PC-3 (cell line): ENCODE measurements at regions of chr6 and their contacts with region 1.

Region 1: DNA sequence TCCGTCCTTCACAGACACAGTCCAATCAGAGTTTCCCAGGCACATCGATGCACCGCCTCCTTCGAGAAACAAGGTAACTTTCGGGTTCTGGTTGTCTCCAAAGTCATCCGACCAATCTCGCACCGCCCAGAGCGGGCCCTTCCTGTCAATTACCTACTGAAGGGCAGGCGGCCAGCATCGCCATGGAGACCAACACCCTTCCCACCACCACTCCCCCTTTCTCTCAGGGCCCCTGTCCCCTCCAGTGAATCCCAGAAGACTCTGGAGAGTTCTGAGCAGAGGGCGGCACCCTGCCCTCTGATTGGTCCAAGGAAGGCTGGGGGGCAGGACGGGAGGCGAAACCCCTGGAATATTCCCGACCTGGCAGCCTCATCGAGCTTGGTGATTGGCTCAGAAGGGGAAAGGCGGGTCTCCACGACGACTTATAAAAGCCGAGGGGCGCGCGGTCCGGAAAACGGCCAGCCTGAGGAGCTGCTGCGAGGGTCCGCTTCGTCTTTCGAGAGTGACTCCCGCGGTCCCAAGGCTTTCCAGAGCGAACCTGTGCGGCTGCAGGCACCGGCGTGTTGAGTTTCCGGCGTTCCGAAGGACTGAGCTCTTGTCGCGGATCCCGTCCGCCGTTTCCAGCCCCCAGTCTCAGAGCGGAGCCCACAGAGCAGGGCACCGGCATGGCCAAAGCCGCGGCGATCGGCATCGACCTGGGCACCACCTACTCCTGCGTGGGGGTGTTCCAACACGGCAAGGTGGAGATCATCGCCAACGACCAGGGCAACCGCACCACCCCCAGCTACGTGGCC is at the start of gene HSPA1B:
- DNase-seq: peak; percentile 99
- ATAC-seq: peak; percentile 82
- H3K4me3 ChIP-seq: peak within 1 kb of the TSS; percentile 95
- H3K27ac ChIP-seq: peak within 1 kb of the TSS; percentile 82
- H3K4me1 ChIP-seq: peaks cover 43% of the 10 kb centered on the region
- H3K27me3 ChIP-seq: no peaks in the 10 kb centered on the region
- CTCF ChIP-seq: no peak
- total RNA-seq, gene HSPA1B: 265 and 331 TPM in 2 replicates

Region 2: GRCh38 chr6:31712296-31712695 is 115.2 kb before region 1 on chr6:
- CTCF ChIA-PET with region 1: no interaction called
- POLR2A ChIA-PET with region 1: interaction called, 3 read pairs
- intact Hi-C with region 1: loop called (anchors 1 kb)
- DNase-seq: peak; percentile 61
- ATAC-seq: peak; percentile 97
- H3K4me3 ChIP-seq: no peak overlapping the region
- H3K27ac ChIP-seq: no peak overlapping the region
- H3K4me1 ChIP-seq: peaks cover 2% of the 10 kb centered on the region
- H3K27me3 ChIP-seq: no peaks in the 10 kb centered on the region
- CTCF ChIP-seq: peak; percentile 66

Region 3: GRCh38 chr6:31795616-31796298 is 31.7 kb before region 1 on chr6 and contains the start of gene VARS1:
- CTCF ChIA-PET with region 1: interaction called, 5 read pairs
- POLR2A ChIA-PET with region 1: interaction called, 14 read pairs
- intact Hi-C with region 1: loop called (anchors 2 kb)
- DNase-seq: peak; percentile 90
- ATAC-seq: peak; percentile 74
- H3K4me3 ChIP-seq: peak within 1 kb of the TSS; percentile 87
- H3K27ac ChIP-seq: peak within 1 kb of the TSS; percentile 84
- H3K4me1 ChIP-seq: peaks cover 24% of the 10 kb centered on the region
- H3K27me3 ChIP-seq: no peaks in the 10 kb centered on the region
- CTCF ChIP-seq: peak; percentile 70
- total RNA-seq, gene VARS1: 89.8 and 130 TPM in 2 replicates

Region 4: DNA sequence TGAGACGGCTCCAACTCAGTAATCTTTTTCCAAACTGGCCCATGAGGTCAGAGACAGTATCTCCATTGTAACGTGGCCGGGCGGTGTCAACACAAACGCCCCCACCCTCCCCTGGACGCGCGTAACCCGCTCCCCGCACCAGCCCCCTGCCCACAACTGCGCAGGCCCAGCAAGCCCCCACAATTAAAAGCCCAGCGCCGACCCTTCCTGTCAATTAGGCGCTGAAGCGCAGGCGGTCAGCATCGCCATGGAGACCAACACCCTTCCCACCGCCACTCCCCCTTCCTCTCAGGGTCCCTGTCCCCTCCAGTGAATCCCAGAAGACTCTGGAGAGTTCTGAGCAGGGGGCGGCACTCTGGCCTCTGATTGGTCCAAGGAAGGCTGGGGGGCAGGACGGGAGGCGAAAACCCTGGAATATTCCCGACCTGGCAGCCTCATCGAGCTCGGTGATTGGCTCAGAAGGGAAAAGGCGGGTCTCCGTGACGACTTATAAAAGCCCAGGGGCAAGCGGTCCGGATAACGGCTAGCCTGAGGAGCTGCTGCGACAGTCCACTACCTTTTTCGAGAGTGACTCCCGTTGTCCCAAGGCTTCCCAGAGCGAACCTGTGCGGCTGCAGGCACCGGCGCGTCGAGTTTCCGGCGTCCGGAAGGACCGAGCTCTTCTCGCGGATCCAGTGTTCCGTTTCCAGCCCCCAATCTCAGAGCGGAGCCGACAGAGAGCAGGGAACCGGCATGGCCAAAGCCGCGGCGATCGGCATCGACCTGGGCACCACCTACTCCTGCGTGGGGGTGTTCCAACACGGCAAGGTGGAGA is 12.3 kb before region 1 on chr6 and contains the starts of genes HSPA1A and HSPA1L:
- CTCF ChIA-PET with region 1: interaction called, 7 read pairs
- POLR2A ChIA-PET with region 1: interaction called, 54 read pairs
- intact Hi-C with region 1: no loop called
- DNase-seq: peak; percentile 98
- ATAC-seq: peak; percentile 76
- H3K4me3 ChIP-seq: peak within 1 kb of the TSS; percentile 87
- H3K27ac ChIP-seq: peak within 1 kb of the TSS; percentile 84
- H3K4me1 ChIP-seq: peaks cover 22% of the 10 kb centered on the region
- H3K27me3 ChIP-seq: no peaks in the 10 kb centered on the region
- CTCF ChIP-seq: no peak
- total RNA-seq, gene HSPA1A: 269 and 324 TPM in 2 replicates
- total RNA-seq, gene HSPA1L: 0.26 and 0.69 TPM in 2 replicates

Region 5: DNA sequence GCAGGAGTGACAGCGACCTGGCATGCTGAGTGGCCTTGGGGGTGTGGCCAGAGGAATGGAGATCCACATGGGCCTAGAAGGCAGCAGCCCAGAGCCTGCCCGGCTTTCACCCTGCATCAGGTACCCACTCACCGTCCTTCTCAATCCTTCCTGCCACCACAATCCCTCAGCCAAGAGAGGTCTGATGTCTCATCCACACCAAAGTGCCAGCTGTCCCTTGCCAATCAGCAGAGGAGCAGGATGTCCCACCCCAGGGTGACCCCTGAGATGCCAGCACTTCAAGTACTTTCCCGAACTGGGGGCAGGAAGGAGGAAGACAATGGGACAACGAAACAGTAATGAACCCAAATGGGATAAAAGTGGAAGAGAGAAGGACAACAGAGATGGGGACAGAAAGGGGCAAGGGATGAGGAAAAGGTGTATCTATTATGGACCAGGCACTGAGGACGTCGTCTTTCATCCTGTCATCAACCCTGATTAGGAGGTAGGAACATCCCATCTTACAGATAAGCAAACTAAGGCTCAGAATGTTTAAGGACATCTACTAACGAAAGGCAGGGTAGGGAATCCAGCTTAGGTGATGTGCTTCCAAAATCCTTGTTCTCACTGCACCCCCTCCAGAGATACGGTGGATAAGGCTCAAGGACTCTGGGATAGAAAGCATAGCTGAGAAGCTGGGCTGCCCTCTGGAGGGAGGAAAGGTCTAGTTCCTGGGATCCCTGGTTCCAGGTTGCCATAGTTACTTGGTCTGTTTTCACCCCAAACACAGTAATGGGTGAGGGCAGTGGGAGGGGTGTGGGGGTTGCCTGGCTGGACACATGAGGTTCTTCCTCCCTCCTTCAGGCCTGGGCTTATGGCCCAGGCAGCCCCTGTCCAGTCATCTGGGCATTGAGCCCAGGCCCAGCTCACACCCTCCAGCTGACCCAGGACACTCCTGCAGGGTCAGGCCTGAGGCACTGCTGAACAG is 286.2 kb after region 1 on chr6:
- CTCF ChIA-PET with region 1: no interaction called
- POLR2A ChIA-PET with region 1: interaction called, 14 read pairs
- intact Hi-C with region 1: no loop called
- DNase-seq: peak; percentile 85
- ATAC-seq: peak; percentile 69
- H3K4me3 ChIP-seq: no peak overlapping the region
- H3K27ac ChIP-seq: peak overlapping the region; percentile 88
- H3K4me1 ChIP-seq: peaks cover 33% of the 10 kb centered on the region
- H3K27me3 ChIP-seq: no peaks in the 10 kb centered on the region
- CTCF ChIP-seq: peak; percentile 54

Region 6: GRCh38 chr6:32203426-32204247 is 376.2 kb after region 1 on chr6:
- CTCF ChIA-PET with region 1: no interaction called
- POLR2A ChIA-PET with region 1: no interaction called
- intact Hi-C with region 1: no loop called
- DNase-seq: no peak
- ATAC-seq: no peak
- H3K4me3 ChIP-seq: no peak overlapping the region
- H3K27ac ChIP-seq: no peak overlapping the region
- H3K4me1 ChIP-seq: no peaks in the 10 kb centered on the region
- H3K27me3 ChIP-seq: no peaks in the 10 kb centered on the region
- CTCF ChIP-seq: no peak